Right ventricle myocardium superior (tissue), 1 donor: ENCODE measurements at regions of chr19 and their contacts with region 1.

Region 1: GRCh38 chr19:29873024-29873800 is 61.4 kb downstream of the CCNE1 start:
- DNase-seq: peak; percentile 66
- ATAC-seq: peak; percentile 89

Region 2: DNA sequence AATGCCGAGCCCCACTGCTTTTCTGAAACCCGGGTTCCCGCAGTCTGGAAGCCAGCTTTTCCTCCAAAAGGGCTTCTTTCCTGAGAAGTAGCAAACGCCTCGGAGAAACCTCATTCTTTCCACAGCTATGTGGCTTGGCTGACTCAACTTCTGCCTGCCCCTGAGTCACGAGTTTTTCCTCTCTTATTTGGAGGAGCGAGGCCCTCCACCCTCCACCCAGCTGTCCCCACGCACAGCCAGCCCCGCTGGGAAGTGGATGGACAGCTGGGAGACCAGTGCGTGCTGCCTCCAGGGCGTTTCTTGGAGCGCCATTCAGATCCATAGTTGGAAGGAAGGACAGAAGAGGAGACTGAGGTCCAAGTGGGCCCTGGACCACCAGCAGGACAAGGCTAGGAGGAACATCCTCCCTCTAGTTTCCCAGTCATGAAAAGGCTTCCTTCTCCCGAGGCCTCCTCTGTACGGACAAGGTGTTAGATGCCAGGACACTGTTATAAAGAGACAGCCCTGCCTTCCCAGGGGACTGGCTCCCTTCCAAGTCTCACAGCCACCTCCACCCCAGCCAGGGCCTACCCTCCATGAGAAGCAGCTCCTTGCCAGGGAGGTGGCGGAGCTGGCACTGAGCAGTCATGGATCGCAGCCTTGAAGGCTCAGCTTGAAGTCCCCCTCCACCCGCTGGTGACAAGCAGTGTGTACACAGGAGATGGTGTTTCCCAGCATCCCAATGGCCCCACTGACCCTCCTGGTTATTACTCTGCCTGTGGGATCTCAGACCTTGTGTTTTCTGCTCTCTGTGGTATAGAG is 210.4 kb before region 1 on chr19:
- intact Hi-C with region 1: no loop called
- DNase-seq: peak; percentile 76
- ATAC-seq: peak; percentile 30

Region 3: GRCh38 chr19:29735800-29736199 is 137.4 kb before region 1 on chr19:
- intact Hi-C with region 1: loop called (anchors 10 kb)
- DNase-seq: no peak
- ATAC-seq: no peak

Region 4: GRCh38 chr19:29771708-29772414 is 101.4 kb before region 1 on chr19:
- intact Hi-C with region 1: loop called (anchors 2 kb)
- DNase-seq: peak; percentile 58
- ATAC-seq: peak; percentile 71

Region 5: DNA sequence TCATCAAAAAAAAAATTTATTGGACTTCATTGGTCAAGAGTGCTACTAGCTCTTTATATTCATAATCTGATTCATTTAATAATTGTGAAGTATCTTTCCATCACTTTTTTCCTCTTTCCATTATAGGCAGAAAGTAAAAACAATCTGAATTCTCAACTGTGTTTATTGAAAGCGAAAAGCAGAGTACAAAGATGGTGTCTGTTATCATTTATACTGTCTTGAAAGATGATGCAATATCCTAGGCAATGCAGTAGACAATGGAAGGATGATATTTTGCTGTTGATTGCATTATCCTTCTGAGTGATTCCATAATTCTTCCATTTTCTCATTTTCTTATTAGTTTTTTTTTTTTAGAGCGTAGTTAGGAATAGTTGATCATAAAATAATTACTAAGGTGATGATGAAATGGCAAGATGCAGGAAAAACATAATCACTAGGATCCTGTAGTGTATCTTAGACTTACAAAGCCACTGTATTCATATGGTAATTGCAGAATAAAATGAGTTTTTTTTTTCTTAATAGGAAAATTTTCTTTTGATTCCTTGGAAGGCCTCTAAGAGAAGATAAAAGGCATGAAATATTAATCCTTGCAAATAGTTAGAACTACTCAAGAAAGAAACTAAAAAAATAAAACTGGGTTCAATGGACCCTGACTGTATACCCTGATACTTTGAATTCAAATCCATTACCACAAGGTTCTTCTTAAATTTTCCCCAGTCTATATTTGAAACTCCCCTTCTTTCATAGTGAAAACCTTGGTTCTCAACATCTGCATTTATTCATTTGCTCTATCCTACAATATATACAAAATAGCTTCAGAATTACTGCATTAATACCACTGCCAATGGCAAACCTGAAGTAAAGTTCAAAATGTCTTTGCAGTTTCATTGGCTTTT is 80.4 kb after region 1 on chr19:
- intact Hi-C with region 1: no loop called
- DNase-seq: no peak
- ATAC-seq: no peak

Region 6: GRCh38 chr19:30263830-30264381 is 390.7 kb after region 1 on chr19:
- intact Hi-C with region 1: no loop called
- DNase-seq: no peak
- ATAC-seq: no peak